ENCODE measurements at regions of chr22 and their contacts with region 1.

Region 1: DNA sequence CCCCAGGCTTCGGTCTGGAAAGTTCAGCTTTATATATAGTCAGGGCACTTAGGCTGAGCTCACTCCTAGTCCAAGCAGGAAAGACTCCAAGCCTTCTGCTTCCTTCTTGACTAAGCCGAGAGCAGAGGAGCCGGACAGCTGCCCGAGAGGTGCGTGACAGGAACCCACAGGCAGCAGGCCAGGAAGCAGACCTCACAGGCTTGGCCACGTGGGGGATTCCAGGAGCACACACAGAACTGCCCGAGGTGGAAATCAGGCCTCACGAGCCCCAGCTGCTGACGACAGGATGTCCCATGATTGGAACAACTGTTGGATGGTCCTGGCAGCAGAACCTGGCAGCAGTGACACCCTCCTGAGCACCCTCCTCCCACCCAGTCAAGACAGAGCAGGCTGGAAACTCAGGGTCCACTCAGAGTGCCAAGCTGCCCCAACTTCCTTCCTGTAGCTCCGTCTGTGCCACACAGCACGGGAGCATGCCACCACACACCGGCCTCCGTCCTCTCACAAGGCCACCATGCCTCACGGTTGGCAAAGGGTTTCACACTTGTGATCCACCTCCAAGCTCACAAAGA is 5.4 kb downstream of the PLA2G6 start:
- DNase-seq: peak; percentile 65
- ATAC-seq: peak; percentile 48
- H3K4me3 ChIP-seq: peak overlapping the region; percentile 34; the same call in 1 of the 2 replicates
- H3K27ac ChIP-seq: peak overlapping the region; percentile 87
- H3K4me1 ChIP-seq: peaks cover 52% of the 10 kb centered on the region
- H3K27me3 ChIP-seq: no peaks in the 10 kb centered on the region
- CTCF ChIP-seq: no peak
- EP300 ChIP-seq: peak; percentile 80 to 85
- POLR2A ChIP-seq: no peak
- RAD21 ChIP-seq: no peak

Region 2: GRCh38 chr22:38214256-38215056 is 38.2 kb after region 1 on chr22:
- CTCF ChIA-PET with region 1: interaction called, 7 read pairs
- POLR2A ChIA-PET with region 1: interaction called, 7 read pairs
- RAD21 ChIA-PET with region 1: interaction called, 7 read pairs
- SMC1A ChIA-PET with region 1: interaction called, 9 read pairs
- in situ Hi-C with region 1: no loop called
- intact Hi-C with region 1: loop called (anchors 5 kb)
- DNase-seq: no peak
- ATAC-seq: peak; percentile 76
- H3K4me3 ChIP-seq: peak overlapping the region; percentile 58
- H3K27ac ChIP-seq: peak overlapping the region; percentile 5; the same call in 1 of the 2 replicates
- H3K4me1 ChIP-seq: peaks cover 46% of the 10 kb centered on the region
- H3K27me3 ChIP-seq: no peaks in the 10 kb centered on the region
- CTCF ChIP-seq: peak in 1 of 3 experiments; percentile 10; a peak in 2 of 6 replicates
- EP300 ChIP-seq: no peak
- POLR2A ChIP-seq: peak; percentile 55; the same call in 1 of the 2 replicates
- RAD21 ChIP-seq: no peak